ENCODE measurements at regions of chr16 and their contacts with region 1.

Region 1: GRCh38 chr16:64240586-64240985 is 881.3 kb downstream of the CDH11 start:
- DNase-seq: no peak
- ATAC-seq: no peak
- H3K4me3 ChIP-seq: no peak overlapping the region
- H3K27ac ChIP-seq: no peak overlapping the region
- H3K4me1 ChIP-seq: peaks cover 0 to 22% (median 0%) of the 10 kb centered on the region in 9 donors
- H3K27me3 ChIP-seq: no peaks in the 10 kb centered on the region
- CTCF ChIP-seq: no peak

Region 2: GRCh38 chr16:64151990-64152767 is 88.4 kb before region 1 on chr16:
- intact Hi-C with region 1: loop called in 1 of 10 experiments (anchors 10 kb)
- DNase-seq: no peak
- ATAC-seq: peak in 2 of 8 donors; percentile 35 to 37
- H3K4me3 ChIP-seq: no peak overlapping the region
- H3K27ac ChIP-seq: no peak overlapping the region
- H3K4me1 ChIP-seq: peaks cover 0 to 6% (median 0%) of the 10 kb centered on the region in 9 donors
- H3K27me3 ChIP-seq: no peaks in the 10 kb centered on the region
- CTCF ChIP-seq: peak in 1 of 9 donors; percentile 10

Region 3: GRCh38 chr16:64159976-64160375 is 80.6 kb before region 1 on chr16:
- intact Hi-C with region 1: loop called in 2 of 10 experiments (anchors 5 to 10 kb)
- DNase-seq: no peak
- ATAC-seq: no peak
- H3K4me3 ChIP-seq: no peak overlapping the region
- H3K27ac ChIP-seq: no peak overlapping the region
- H3K4me1 ChIP-seq: peaks cover 0 to 11% (median 0%) of the 10 kb centered on the region in 9 donors
- H3K27me3 ChIP-seq: no peaks in the 10 kb centered on the region
- CTCF ChIP-seq: no peak

Measured in heart right ventricle (tissue), 16 donors.